Activated naive CD4-positive, alpha-beta T cell treated with anti-CD3 and anti-CD28 coated beads, Interleukin-2, amount 10 ng/mL, durations not matched to agents 7 days and 5 days (primary cell): ENCODE measurements at regions of chr6 and their contacts with region 1.

Region 1: DNA sequence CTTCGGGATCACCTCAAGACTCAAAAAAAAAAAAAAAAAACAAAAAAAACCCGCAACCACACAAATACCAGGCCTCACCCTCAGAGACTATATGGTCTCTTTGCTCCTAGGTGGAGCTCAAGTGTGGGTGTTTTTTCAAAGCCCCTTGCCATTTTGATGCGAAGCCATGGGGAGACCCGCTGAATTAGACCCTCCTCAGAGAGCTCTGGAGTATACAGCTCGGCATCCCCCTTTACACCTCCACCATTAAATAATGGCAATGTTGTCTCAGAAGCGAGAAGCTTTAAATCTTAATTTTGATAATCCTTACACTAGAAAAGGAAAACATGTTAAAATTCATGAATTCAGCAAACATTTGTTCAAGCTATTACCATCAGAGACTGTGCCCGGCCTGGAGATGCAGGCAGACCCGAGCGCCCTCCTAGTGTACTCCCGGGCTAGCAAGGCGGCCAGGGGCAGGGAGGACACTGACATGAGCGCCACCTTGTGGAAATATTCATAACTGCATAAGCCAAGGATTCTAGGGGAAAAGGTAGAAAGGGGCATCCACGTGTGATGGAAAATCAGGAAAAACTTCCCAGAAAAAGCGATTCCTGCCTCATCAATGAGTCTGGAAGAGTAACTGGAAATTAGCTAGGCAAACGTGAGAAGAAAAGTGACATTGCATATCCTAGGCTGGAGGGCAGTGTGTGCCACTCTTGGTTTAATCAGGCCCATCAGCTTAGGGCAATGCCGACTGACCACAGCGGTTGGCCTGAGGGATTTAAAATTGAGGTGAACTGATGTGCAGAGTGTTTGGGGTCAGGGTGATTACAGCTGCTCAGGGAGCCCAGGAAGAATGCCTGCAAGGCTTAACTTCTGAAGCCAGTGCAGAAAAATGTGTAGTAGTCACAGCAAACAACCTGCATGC is 72.5 kb downstream of the B3GAT2 start:
- DNase-seq: peak; percentile 63
- H3K4me3 Mint-ChIP-seq: no peak overlapping the region
- H3K27ac Mint-ChIP-seq: no peak overlapping the region
- H3K4me1 Mint-ChIP-seq: no peaks in the 10 kb centered on the region
- H3K27me3 Mint-ChIP-seq: peaks cover 11% of the 10 kb centered on the region

Region 2: GRCh38 chr6:70310063-70310694 is 574.1 kb before region 1 on chr6:
- CTCF ChIA-PET with region 1: interaction called, 24 read pairs
- DNase-seq: no peak
- H3K4me3 Mint-ChIP-seq: no peak overlapping the region
- H3K27ac Mint-ChIP-seq: no peak overlapping the region
- H3K4me1 Mint-ChIP-seq: no peaks in the 10 kb centered on the region
- H3K27me3 Mint-ChIP-seq: peaks cover 4% of the 10 kb centered on the region

Region 3: DNA sequence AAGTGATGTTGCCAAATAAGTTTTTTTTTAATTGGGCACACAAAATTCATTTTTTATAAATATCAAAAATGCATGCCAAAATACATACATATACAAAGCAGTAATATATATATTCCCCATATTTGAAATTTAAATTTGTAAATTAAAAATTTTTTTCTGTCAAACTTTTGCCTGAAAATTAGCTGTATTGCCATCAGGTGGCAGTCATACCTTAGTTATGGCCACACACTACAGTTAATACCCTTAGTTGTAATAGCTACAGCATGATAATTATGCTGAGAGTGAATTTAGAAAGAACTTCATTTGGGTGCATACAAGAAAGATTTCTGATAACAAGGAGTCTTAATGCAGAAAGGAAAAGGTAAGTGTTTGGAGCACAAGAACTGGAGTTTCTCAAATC is 363.8 kb before region 1 on chr6:
- CTCF ChIA-PET with region 1: interaction called, 25 read pairs
- DNase-seq: no peak
- H3K4me3 Mint-ChIP-seq: no peak overlapping the region
- H3K27ac Mint-ChIP-seq: no peak overlapping the region
- H3K4me1 Mint-ChIP-seq: peaks cover 15% of the 10 kb centered on the region
- H3K27me3 Mint-ChIP-seq: no peaks in the 10 kb centered on the region

Region 4: DNA sequence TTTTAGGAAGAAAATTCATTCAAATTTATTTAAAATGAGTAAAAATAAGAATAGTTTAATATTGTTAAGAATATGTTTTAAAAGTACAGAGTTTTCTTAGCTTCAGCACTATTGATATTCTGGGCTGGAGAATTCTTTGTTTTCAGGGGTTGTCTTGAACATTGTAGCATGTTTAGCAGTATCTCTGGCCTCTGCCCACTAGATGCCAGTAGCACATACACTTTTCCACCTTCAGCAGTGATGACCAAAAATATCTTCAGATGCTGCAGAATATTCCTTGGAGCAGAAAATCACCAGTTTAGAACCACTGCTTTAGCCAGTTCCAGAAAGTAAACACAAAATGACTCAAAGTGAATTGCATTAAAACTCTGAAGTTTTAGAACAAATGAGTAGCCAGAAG is 337.0 kb before region 1 on chr6:
- CTCF ChIA-PET with region 1: interaction called, 14 read pairs
- DNase-seq: peak; percentile 49
- H3K4me3 Mint-ChIP-seq: no peak overlapping the region
- H3K27ac Mint-ChIP-seq: no peak overlapping the region
- H3K4me1 Mint-ChIP-seq: no peaks in the 10 kb centered on the region
- H3K27me3 Mint-ChIP-seq: no peaks in the 10 kb centered on the region

Region 5: GRCh38 chr6:70651326-70651905 is 232.9 kb before region 1 on chr6:
- CTCF ChIA-PET with region 1: no interaction called
- DNase-seq: peak; percentile 90
- H3K4me3 Mint-ChIP-seq: peak overlapping the region; percentile 37
- H3K27ac Mint-ChIP-seq: peak overlapping the region; percentile 87
- H3K4me1 Mint-ChIP-seq: peaks cover 50% of the 10 kb centered on the region
- H3K27me3 Mint-ChIP-seq: peaks cover 6% of the 10 kb centered on the region

Region 6: GRCh38 chr6:70706491-70707123 is 177.7 kb before region 1 on chr6:
- CTCF ChIA-PET with region 1: interaction called, 44 read pairs
- DNase-seq: no peak
- H3K4me3 Mint-ChIP-seq: no peak overlapping the region
- H3K27ac Mint-ChIP-seq: no peak overlapping the region
- H3K4me1 Mint-ChIP-seq: peaks cover 11% of the 10 kb centered on the region
- H3K27me3 Mint-ChIP-seq: no peaks in the 10 kb centered on the region